ENCODE measurements at regions of chr6 and their contacts with region 1.

Region 1: DNA sequence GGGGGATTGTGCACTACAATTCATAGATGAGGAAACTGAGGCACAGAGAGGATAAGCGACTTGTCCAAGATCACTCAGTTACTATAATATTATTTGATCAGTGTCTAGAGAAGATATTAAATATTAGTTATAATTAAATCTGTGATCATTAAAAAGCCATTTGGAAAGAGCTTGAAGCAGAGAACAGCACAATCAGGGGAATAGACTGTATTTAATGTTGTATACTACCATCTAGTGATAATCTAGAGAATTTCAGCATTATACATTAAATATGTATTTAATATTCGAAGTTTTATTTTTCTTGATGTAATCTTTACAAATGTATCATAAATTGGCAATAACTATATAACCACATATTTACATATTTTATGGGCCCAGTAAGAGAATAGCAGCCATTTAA is 20.1 kb upstream of the MTCL3 start:
- DNase-seq: no peak
- H3K4me3 ChIP-seq: no peak overlapping the region
- H3K27ac ChIP-seq: no peak overlapping the region
- H3K27me3 ChIP-seq: peaks cover 3% of the 10 kb centered on the region
- CTCF ChIP-seq: peak; percentile 47

Region 2: GRCh38 chr6:127186889-127187288 is 352.4 kb before region 1 on chr6:
- CTCF ChIA-PET with region 1: interaction called, 16 read pairs
- POLR2A ChIA-PET with region 1: no interaction called
- DNase-seq: no peak
- H3K4me3 ChIP-seq: no peak overlapping the region
- H3K27ac ChIP-seq: no peak overlapping the region
- H3K27me3 ChIP-seq: no peaks in the 10 kb centered on the region
- CTCF ChIP-seq: peak; percentile 50

Region 3: DNA sequence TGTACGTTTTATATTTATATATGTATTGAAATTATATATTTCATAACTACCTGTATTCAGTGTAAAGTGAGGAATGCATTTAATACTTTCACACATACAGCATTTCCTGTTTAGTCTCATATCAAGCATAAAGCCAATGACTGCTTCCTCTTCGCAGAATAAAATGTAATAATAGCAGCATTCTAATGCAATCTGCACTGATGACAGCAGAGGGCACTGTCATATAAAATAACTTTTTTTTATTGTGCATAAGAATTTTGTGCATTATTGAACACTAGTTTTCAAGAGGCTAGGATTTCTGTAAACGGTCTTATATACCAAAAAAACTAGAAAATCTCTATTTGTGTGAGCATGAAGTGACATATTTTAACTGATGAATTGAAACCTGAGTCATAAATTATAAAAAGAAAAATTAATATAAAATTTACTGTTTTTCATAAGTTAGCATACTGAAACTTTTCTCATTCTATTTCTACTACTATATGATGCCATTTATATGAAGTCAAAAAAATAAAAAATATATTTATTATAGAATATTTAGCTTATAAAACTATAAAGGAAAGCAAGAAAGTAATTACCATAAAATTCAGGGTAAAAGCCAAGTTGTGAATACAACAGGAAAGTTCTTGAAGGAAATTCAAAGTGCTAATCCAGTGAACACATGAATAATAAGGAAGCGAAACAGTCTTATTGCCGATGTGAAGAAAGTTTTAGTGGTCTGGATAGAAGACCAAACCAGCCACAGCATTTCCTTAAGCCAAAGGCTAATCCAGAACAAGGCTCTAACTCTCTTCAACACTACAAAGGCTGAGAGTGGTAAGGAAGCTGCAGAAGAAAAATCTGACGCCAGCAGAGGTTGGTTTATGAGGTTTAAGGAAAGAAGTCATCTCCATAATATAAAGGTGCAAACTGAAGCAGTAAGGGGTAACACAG is 236.3 kb before region 1 on chr6:
- CTCF ChIA-PET with region 1: interaction called, 60 read pairs
- POLR2A ChIA-PET with region 1: no interaction called
- DNase-seq: no peak
- H3K4me3 ChIP-seq: no peak overlapping the region
- H3K27ac ChIP-seq: no peak overlapping the region
- H3K27me3 ChIP-seq: no peaks in the 10 kb centered on the region
- CTCF ChIP-seq: peak; percentile 74

Region 4: DNA sequence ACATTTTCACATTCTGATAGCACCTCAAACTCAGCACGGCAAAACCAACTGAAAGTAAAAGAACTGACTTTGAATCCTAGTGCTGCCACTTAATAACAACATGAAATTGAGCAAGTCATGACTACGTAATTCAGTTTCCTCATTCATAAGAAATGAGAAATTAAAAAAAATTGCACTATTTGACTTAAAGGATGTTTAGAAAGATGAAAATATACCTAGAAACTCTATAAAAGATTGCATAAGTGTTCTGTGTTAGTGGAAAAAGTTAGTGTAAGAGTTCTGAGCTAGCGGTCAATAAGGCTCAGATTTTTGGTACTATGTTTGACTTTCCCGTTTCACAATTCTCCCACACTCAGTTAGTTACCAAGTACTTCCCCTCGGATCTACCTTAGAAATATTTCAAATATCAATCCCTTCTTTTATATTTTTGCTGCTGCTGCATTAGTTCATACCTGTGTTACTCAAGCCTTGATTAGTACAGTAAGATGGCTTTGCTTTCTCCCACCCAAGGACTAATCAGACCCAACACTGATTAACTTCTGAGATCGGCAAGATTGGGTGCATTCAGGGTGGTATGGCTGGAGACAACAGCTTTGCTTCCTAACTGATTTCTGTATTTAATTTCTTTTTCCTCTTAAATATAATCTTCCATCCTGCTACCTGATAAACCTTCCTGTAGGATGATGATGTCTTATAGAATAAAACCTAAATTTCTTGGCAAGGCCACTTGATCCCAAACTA is 221.7 kb before region 1 on chr6:
- CTCF ChIA-PET with region 1: interaction called, 13 read pairs
- POLR2A ChIA-PET with region 1: no interaction called
- DNase-seq: no peak
- H3K4me3 ChIP-seq: no peak overlapping the region
- H3K27ac ChIP-seq: no peak overlapping the region
- H3K27me3 ChIP-seq: no peaks in the 10 kb centered on the region
- CTCF ChIP-seq: no peak

Region 5: GRCh38 chr6:127420556-127420955 is 118.7 kb before region 1 on chr6:
- CTCF ChIA-PET with region 1: interaction called, 13 read pairs
- POLR2A ChIA-PET with region 1: no interaction called
- DNase-seq: peak; percentile 76
- H3K4me3 ChIP-seq: no peak overlapping the region
- H3K27ac ChIP-seq: no peak overlapping the region
- H3K27me3 ChIP-seq: no peaks in the 10 kb centered on the region
- CTCF ChIP-seq: peak; percentile 46

Region 6: DNA sequence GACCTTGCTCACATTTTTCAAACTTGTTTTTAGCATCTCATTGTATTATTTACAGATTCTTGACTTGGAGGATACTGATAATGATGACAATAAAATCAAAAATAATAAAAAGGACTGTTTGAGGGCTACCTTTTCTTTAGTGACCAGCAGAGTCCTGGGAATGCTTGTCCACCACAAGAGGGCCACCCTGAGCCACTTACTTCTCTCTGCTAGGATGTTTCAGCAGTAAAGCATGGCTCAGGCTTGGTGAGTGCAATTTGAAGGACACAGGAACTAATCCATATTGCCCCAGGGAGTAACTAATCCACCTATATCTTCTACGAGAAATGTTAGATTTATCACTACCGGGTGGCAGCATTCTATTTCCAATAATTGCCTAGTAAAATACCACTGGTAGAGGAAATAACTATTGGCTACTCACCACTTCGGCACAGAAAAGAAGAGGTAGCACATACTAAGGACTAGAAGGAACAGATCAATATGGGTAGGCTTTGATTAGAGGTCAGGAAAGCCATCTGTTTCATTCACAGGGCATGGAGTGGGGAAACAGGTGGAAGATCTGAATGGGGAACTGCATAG is 74.3 kb before region 1 on chr6:
- CTCF ChIA-PET with region 1: interaction called, 75 read pairs
- POLR2A ChIA-PET with region 1: no interaction called
- DNase-seq: no peak
- H3K4me3 ChIP-seq: no peak overlapping the region
- H3K27ac ChIP-seq: no peak overlapping the region
- H3K27me3 ChIP-seq: no peaks in the 10 kb centered on the region
- CTCF ChIP-seq: peak; percentile 98

Region 7: DNA sequence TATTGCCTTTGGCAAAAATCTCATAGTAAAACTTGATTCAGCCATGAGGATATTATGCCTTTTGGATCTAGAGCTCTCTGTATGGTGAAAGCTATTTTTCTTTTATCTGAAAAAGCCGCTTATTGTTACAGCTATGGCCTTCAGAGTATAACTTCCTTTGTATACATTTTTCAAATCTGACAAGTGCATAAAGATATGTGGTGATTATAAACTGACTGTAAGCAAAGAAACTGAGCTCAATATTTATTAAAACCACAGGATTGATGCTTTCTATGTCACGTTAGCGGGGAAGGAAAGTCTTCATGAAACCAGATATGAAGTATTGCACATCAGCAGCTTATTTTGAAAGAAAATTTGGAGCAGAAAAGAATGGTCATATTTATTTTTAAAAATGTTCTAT is 209.8 kb after region 1 on chr6:
- CTCF ChIA-PET with region 1: no interaction called
- POLR2A ChIA-PET with region 1: no interaction called
- DNase-seq: no peak
- H3K4me3 ChIP-seq: no peak overlapping the region
- H3K27ac ChIP-seq: no peak overlapping the region
- H3K27me3 ChIP-seq: no peaks in the 10 kb centered on the region
- CTCF ChIP-seq: no peak